Heart right ventricle (tissue), 16 donors: ENCODE measurements at regions of chr5 and their contacts with region 1.

Region 1: DNA sequence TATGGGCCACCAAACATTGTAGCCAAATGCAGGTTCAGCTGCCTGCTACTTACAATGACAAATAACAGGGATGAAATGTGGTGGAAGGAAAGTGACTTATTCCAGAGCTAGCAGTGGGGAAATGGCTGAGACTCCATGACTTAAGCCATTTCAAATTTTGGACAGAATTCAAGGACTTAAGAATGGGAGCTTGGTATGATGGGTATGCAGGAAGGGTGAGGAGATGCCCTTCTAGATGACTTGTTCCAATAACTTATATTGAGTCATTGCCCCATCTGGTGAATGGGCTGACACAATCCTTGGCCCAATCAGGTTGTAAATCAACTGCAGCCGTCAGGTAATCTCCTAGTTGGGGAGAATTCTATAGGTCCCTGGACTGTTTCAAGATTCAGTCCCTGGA is 230.7 kb upstream of the SGCD start:
- DNase-seq: no peak
- ATAC-seq: no peak
- H3K4me3 ChIP-seq: no peak overlapping the region
- H3K27ac ChIP-seq: no peak overlapping the region
- H3K4me1 ChIP-seq: peaks cover 0 to 8% (median 0%) of the 10 kb centered on the region in 9 donors
- H3K27me3 ChIP-seq: no peaks in the 10 kb centered on the region
- CTCF ChIP-seq: no peak

Region 2: GRCh38 chr5:156015137-156015536 is 81.1 kb before region 1 on chr5:
- intact Hi-C with region 1: no loop called
- DNase-seq: no peak
- ATAC-seq: no peak
- H3K4me3 ChIP-seq: no peak overlapping the region
- H3K27ac ChIP-seq: no peak overlapping the region
- H3K4me1 ChIP-seq: no peaks in the 10 kb centered on the region
- H3K27me3 ChIP-seq: no peaks in the 10 kb centered on the region
- CTCF ChIP-seq: no peak

Region 3: DNA sequence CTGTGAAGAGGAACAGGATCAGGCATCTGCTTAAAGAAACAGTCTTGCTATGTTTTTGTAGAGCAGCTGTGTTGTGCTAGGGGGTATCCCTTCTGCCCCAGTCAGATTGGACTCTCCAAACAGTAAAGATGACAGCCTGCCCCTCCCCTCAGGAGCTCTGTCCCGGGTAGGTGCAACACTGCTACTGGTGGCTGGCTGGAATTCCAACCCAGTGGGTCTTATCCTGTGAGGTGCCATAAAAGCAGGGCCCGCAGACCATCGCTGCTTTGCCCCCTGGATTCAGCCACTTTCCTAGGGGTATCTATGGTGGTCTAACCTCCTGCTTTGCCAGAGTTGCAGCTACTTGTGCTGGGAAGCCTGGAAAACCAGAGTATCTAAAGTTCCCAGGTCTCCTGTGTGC is 639.2 kb after region 1 on chr5:
- intact Hi-C with region 1: loop called in 1 of 10 experiments (anchors 5 kb)
- DNase-seq: no peak
- ATAC-seq: peak in 2 of 8 donors; percentile 22 to 61
- H3K4me3 ChIP-seq: no peak overlapping the region
- H3K27ac ChIP-seq: no peak overlapping the region
- H3K4me1 ChIP-seq: peaks cover 0 to 5% (median 0%) of the 10 kb centered on the region in 9 donors
- H3K27me3 ChIP-seq: no peaks in the 10 kb centered on the region
- CTCF ChIP-seq: no peak